MCF 10A (cell line): ENCODE measurements at regions of chr3 and their contacts with region 1.

Region 1: GRCh38 chr3:13525827-13526816 is 22.8 kb upstream of the FBLN2 start:
- DNase-seq: peak; percentile 58
- H3K4me3 Mint-ChIP-seq: no peak overlapping the region
- H3K27ac Mint-ChIP-seq: peak overlapping the region; percentile 97
- H3K4me1 Mint-ChIP-seq: peaks cover 30% of the 10 kb centered on the region
- H3K27me3 Mint-ChIP-seq: no peaks in the 10 kb centered on the region
- CTCF ChIP-seq: no peak

Region 2: GRCh38 chr3:13537921-13538320 is 11.8 kb after region 1 on chr3:
- CTCF ChIA-PET with region 1: interaction called, 5 read pairs
- POLR2A ChIA-PET with region 1: interaction called, 12 read pairs
- intact Hi-C with region 1: no loop called
- DNase-seq: peak; percentile 80
- H3K4me3 Mint-ChIP-seq: no peak overlapping the region
- H3K27ac Mint-ChIP-seq: peak overlapping the region; percentile 96
- H3K4me1 Mint-ChIP-seq: peaks cover 43% of the 10 kb centered on the region
- H3K27me3 Mint-ChIP-seq: no peaks in the 10 kb centered on the region
- CTCF ChIP-seq: no peak

Region 3: GRCh38 chr3:13559764-13560525 is 33.8 kb after region 1 on chr3:
- CTCF ChIA-PET with region 1: no interaction called
- POLR2A ChIA-PET with region 1: no interaction called
- intact Hi-C with region 1: no loop called
- DNase-seq: no peak
- H3K4me3 Mint-ChIP-seq: no peak overlapping the region
- H3K27ac Mint-ChIP-seq: no peak overlapping the region
- H3K4me1 Mint-ChIP-seq: peaks cover 16% of the 10 kb centered on the region
- H3K27me3 Mint-ChIP-seq: no peaks in the 10 kb centered on the region
- CTCF ChIP-seq: no peak